ENCODE measurements at regions of chr5 and their contacts with region 1.

Region 1: GRCh38 chr5:132064738-132065331 is 4.4 kb downstream of the IL3 start:
- DNase-seq: peak; percentile 35
- H3K4me3 ChIP-seq: no peak overlapping the region
- H3K27ac ChIP-seq: no peak overlapping the region
- H3K4me1 ChIP-seq: no peaks in the 10 kb centered on the region
- H3K27me3 ChIP-seq: no peaks in the 10 kb centered on the region
- CTCF ChIP-seq: peak; percentile 58 to 80 (median 75)
- POLR2A ChIP-seq: no peak

Region 2: DNA sequence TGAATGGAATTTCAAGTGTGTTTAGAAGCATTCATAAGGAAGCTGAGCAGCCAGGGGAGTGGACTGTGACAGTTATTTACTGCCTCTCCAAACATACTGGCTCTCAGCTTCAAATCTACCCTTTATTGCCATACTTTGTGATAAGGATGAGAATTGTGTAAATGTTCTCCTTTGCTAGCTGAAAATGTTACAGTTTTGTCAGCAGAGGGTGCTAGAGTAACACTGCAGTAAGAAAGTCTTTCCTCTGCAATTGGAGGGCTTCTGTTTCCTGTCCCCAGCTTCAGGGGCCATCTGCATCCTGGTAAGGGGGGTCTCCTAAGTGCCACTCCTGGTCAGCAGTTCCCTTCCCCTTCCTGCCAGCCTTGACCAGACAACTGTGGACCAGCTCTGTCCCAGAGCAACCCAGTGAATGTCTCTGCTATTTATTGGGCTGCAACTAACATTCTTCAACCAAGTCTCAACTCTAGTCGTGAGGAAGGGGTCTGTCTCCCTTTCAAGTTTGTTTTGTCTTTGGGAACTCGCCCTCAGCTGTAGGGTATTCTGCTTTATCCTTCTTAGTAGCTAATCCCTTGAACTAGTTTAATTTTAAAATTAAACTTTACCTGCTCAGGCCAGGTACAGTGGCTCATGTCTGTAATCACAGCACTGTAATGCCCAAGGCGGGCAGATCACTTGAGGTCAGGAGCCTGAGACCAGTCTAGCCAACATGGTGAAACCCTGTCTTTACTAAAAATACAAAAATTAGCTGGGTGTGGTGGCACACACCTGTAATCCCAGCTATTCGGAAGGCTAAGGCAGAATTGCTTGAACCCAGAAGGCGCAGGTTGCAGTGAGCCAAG is 475.1 kb before region 1 on chr5:
- intact Hi-C with region 1: loop called (anchors 5 kb)
- DNase-seq: no peak
- H3K4me3 ChIP-seq: no peak overlapping the region
- H3K27ac ChIP-seq: no peak overlapping the region
- H3K4me1 ChIP-seq: no peaks in the 10 kb centered on the region
- H3K27me3 ChIP-seq: no peaks in the 10 kb centered on the region
- CTCF ChIP-seq: peak in 3 of 4 experiments; percentile 81 to 87 (median 82)
- POLR2A ChIP-seq: no peak

Region 3: GRCh38 chr5:131952301-131952857 is 112.5 kb before region 1 on chr5:
- intact Hi-C with region 1: no loop called
- DNase-seq: no peak
- H3K4me3 ChIP-seq: no peak overlapping the region
- H3K27ac ChIP-seq: no peak overlapping the region
- H3K4me1 ChIP-seq: no peaks in the 10 kb centered on the region
- H3K27me3 ChIP-seq: no peaks in the 10 kb centered on the region
- CTCF ChIP-seq: no peak
- POLR2A ChIP-seq: no peak